HepG2 (cell line): ENCODE measurements at regions of chr6 and their contacts with region 1.

Region 1: DNA sequence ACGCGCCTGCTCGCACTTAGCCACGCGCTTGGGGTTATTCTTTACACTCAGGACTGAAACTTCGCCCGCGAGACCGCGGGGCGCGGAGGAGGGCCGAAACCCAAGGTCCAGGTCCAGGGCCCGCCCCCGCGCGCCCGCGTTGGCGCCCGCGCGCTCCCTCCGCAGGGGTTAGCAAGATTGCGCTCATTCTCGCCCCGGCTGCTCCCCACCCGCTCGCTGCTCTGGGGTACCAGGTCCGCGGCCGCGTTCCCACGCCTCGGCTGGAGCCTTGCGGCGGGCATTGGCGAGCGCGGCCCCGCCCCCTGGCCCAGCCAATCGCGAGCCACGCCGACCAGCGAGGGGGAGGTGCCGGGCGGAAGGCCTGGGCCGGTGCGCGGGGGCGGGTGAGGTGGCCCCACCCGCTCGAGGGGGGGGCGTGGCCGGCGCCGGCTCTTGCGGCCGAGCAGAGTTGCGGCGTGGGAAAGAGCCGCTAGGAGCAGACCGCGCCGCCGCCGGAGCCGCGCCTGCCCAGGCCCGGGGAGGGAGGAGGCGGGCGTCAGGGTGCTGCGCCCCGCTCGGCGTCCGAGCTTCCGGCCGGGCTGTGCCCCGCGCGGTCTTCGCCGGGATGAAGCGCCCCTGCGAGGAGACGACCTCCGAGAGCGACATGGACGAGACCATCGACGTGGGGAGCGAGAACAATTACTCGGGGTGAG is at the start of gene HEY2:
- DNase-seq: peak; percentile 84
- ATAC-seq: peak; percentile 89
- H3K4me3 ChIP-seq: peak within 1 kb of the TSS; percentile 61 to 86 (median 65)
- H3K27ac ChIP-seq: no peak within 1 kb of the TSS
- H3K4me1 ChIP-seq: peaks cover 46% of the 10 kb centered on the region
- H3K27me3 ChIP-seq: peaks cover 3 to 60% of the 10 kb centered on the region in 2 experiments; a peak in 4 of 5 replicates
- CTCF ChIP-seq: peak; percentile 15; the same call in 1 of the 2 replicates
- EP300 ChIP-seq: peak in 1 of 2 experiments; percentile 12; a peak in 1 of 4 replicates
- POLR2A ChIP-seq: no peak
- RAD21 ChIP-seq: peak; percentile 62; the same call in 1 of the 2 replicates
- total RNA-seq, gene HEY2: 0.04 TPM in 1 of 2 replicates, not detected in the other

Region 2: DNA sequence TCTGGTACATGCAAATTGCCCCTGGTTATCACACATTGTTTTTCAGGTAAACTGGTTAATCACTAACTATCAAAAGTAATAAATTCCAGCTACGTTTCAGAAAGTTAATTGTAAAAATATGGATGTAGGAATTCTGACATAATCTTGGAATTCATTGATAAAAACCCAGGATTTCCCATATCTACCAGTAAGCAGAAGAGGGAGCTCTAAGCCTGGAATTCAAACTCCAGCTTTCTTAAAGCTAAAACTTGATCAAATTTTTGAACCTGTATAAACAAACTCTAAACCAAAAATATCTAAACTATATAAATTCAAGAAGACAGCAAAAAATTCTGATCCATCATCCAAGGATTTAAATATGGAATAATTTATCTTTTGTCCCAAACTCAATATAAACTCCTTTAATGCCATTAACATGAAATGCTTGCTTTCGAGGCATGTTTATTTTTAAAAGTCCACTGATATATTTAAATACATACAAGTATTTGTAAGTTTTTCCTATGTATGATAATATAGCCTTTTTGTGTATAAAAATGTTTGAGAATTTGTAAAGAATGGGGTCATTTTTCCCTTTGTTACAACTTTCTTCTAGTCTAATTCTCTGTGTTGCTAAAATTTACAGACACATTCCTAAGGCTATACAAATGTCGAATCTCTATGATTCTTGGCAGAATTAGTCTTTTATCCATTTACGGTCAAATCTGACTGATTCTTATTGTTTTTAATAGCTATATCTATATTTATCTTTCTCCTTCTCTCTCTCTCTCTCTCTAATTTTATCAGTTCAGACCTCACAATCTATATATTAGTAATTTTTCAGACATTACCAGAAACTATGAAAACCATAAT is 878.5 kb before region 1 on chr6:
- CTCF ChIA-PET with region 1: no interaction called
- POLR2A ChIA-PET with region 1: no interaction called
- in situ Hi-C with region 1: loop called (anchors 25 kb)
- intact Hi-C with region 1: no loop called
- DNase-seq: peak; percentile 14
- ATAC-seq: no peak
- H3K4me3 ChIP-seq: no peak overlapping the region
- H3K27ac ChIP-seq: no peak overlapping the region
- H3K4me1 ChIP-seq: no peaks in the 10 kb centered on the region
- H3K27me3 ChIP-seq: no peaks in the 10 kb centered on the region
- CTCF ChIP-seq: peak; percentile 54
- EP300 ChIP-seq: no peak
- POLR2A ChIP-seq: no peak
- RAD21 ChIP-seq: 0 out of 2 replicates have a peak, but pooled peaks have one; percentile 33

Region 3: DNA sequence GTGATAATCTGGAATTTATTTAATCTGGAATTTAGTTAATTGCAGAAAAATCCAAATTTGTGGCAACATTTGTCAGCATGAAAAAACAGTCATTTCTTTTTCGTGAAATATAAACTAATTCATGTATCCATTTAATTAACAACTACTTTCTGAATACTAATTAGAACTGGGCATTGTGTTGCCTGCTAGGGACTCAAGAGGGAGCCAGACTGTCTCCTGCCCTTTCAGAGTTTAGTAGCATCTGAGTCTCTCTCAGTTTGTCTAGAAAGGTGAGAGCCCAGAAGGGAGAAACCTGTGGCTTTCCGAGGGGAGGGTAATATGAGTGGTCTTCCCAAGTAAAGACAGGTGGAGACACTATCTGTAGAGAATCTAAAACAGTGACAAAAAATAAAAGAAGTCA is 236.7 kb before region 1 on chr6:
- CTCF ChIA-PET with region 1: no interaction called
- POLR2A ChIA-PET with region 1: no interaction called
- in situ Hi-C with region 1: loop called (anchors 10 kb)
- intact Hi-C with region 1: loop called (anchors 2 kb)
- DNase-seq: peak; percentile 12
- ATAC-seq: peak; percentile 84
- H3K4me3 ChIP-seq: no peak overlapping the region
- H3K27ac ChIP-seq: no peak overlapping the region
- H3K4me1 ChIP-seq: peaks cover 16% of the 10 kb centered on the region
- H3K27me3 ChIP-seq: no peaks in the 10 kb centered on the region; a peak in 1 of 5 replicates
- CTCF ChIP-seq: peak; percentile 37; the same call in 1 of the 2 replicates
- EP300 ChIP-seq: no peak
- POLR2A ChIP-seq: no peak
- RAD21 ChIP-seq: no peak

Region 4: GRCh38 chr6:125779924-125780539 is 30.7 kb after region 1 on chr6:
- CTCF ChIA-PET with region 1: no interaction called
- POLR2A ChIA-PET with region 1: interaction called, 5 read pairs
- in situ Hi-C with region 1: no loop called
- intact Hi-C with region 1: loop called (anchors 1 kb)
- DNase-seq: peak; percentile 96
- ATAC-seq: peak; percentile 91
- H3K4me3 ChIP-seq: peak overlapping the region; percentile 60 to 85 (median 81)
- H3K27ac ChIP-seq: peak overlapping the region; percentile 83
- H3K4me1 ChIP-seq: peaks cover 30% of the 10 kb centered on the region
- H3K27me3 ChIP-seq: no peaks in the 10 kb centered on the region; a peak in 1 of 5 replicates
- CTCF ChIP-seq: no peak; the same call in 1 of the 2 replicates
- EP300 ChIP-seq: no peak; a peak in 1 of 4 replicates
- POLR2A ChIP-seq: no peak
- RAD21 ChIP-seq: no peak

Region 5: GRCh38 chr6:125986300-125987025 is 237.1 kb after region 1 on chr6 and contains the start of gene TRMT11:
- CTCF ChIA-PET with region 1: no interaction called
- POLR2A ChIA-PET with region 1: no interaction called
- in situ Hi-C with region 1: no loop called
- intact Hi-C with region 1: no loop called
- DNase-seq: peak; percentile 97
- ATAC-seq: peak; percentile 98
- H3K4me3 ChIP-seq: peak within 1 kb of the TSS; percentile 80 to 95 (median 84)
- H3K27ac ChIP-seq: peak within 1 kb of the TSS; percentile 87
- H3K4me1 ChIP-seq: peaks cover 62% of the 10 kb centered on the region
- H3K27me3 ChIP-seq: no peaks in the 10 kb centered on the region; a peak in 1 of 5 replicates
- CTCF ChIP-seq: peak; percentile 46
- EP300 ChIP-seq: peak in 1 of 2 experiments; percentile 6; a peak in 3 of 4 replicates
- POLR2A ChIP-seq: peak; percentile 96 to 98
- RAD21 ChIP-seq: peak; percentile 47
- total RNA-seq, gene TRMT11: 66.0 and 81.9 TPM in 2 replicates